CD4-positive, alpha-beta memory T cell (primary cell): ENCODE measurements at regions of chr1 and their contacts with region 1.

Region 1: GRCh38 chr1:112809253-112809684 is 94.1 kb upstream of the PPM1J start:
- DNase-seq: peak; percentile 25 to 50 (median 44)
- H3K4me3 ChIP-seq: no peak overlapping the region
- H3K4me3 Mint-ChIP-seq: no peak overlapping the region
- H3K27ac ChIP-seq: no peak overlapping the region
- H3K27ac Mint-ChIP-seq: no peak overlapping the region
- H3K4me1 ChIP-seq: no peaks in the 10 kb centered on the region
- H3K4me1 Mint-ChIP-seq: peaks cover 0 to 1% (median 0%) of the 10 kb centered on the region in 4 donors
- H3K27me3 ChIP-seq: no peaks in the 10 kb centered on the region
- H3K27me3 Mint-ChIP-seq: peaks cover 0 to 2% of the 10 kb centered on the region in 2 donors

Region 2: DNA sequence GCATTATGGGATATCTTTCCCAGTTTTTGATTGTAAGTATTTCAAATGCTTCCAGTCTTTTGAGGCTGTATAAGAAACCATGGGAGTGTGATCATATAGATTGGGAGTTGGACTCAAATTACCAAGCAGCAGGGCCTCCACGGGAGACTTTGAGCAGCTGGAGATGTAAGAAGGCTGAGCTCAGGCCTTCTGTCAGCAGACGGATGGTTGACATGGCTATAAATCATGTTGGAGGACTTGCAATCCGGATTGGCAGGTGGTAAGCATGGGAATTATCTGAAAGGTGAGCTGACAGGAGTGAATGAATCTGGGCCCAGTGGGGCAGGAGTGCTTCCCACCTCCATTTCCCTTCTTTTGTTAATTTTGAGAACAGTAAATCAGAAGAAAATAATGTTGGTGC is 11.0 kb before region 1 on chr1:
- CTCF ChIA-PET with region 1: interaction called, 21 read pairs
- POLR2A ChIA-PET with region 1: no interaction called
- intact Hi-C with region 1: no loop called
- DNase-seq: no peak
- H3K4me3 ChIP-seq: no peak overlapping the region
- H3K4me3 Mint-ChIP-seq: no peak overlapping the region
- H3K27ac ChIP-seq: no peak overlapping the region
- H3K27ac Mint-ChIP-seq: no peak overlapping the region
- H3K4me1 ChIP-seq: no peaks in the 10 kb centered on the region
- H3K4me1 Mint-ChIP-seq: no peaks in the 10 kb centered on the region
- H3K27me3 ChIP-seq: no peaks in the 10 kb centered on the region
- H3K27me3 Mint-ChIP-seq: peaks cover 0 to under 1% of the 10 kb centered on the region in 2 donors